HepG2 (cell line): ENCODE measurements at regions of chr9 and their contacts with region 1.

Region 1: GRCh38 chr9:32526041-32526706 is at the start of gene RIGI:
- DNase-seq: peak; percentile 89
- ATAC-seq: peak; percentile 90
- H3K4me3 ChIP-seq: peak within 1 kb of the TSS; percentile 80 to 86 (median 82)
- H3K27ac ChIP-seq: peak within 1 kb of the TSS; percentile 75
- H3K4me1 ChIP-seq: peaks cover 39% of the 10 kb centered on the region
- H3K27me3 ChIP-seq: no peaks in the 10 kb centered on the region; a peak in 1 of 5 replicates
- CTCF ChIP-seq: peak; percentile 75
- EP300 ChIP-seq: 0 out of 4 replicates have a peak, but pooled peaks of 1 of the 2 experiments have one; percentile 3
- POLR2A ChIP-seq: peak; percentile 65 to 79
- RAD21 ChIP-seq: peak; percentile 47; the same call in 1 of the 2 replicates
- total RNA-seq, gene RIGI: 8.2 and 12.2 TPM in 2 replicates

Region 2: DNA sequence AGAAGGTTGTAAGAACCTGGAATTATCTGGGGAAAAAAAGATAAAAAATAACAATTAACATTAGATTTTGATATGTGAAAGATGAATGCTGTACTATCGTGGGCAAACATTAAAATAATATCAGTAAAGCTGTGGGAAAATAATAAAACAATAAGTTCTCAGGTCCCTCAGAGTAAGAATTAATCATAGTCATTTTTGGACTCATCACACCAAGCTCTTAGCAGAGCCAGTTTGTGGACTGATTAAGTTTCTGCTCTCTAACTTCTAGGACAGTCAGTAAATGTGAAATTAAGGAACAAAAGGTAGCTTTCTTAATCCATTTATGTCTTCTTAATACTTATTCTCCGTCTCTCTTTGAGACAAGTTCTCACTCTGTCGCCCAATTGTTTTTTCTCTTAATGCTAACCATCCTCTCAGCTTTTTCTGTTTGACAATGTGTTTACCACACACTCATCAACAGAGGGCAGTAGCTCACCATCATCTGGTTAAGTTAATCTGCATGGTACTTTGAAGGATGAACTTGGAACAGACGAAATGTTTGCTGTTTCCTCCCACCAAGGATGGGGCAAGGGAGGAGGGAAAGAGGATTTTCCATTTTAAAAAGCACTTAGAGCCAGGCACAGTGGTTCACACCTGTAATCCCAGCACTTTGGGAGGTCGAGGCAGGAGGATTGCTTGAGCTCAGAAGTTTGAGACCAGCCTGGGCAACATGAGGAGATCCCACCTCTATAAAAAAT is 147.0 kb before region 1 on chr9:
- CTCF ChIA-PET with region 1: interaction called, 33 read pairs
- POLR2A ChIA-PET with region 1: interaction called, 34 read pairs
- in situ Hi-C with region 1: loop called (anchors 5 kb)
- intact Hi-C with region 1: loop called (anchors 1 kb)
- DNase-seq: peak; percentile 85
- ATAC-seq: peak; percentile 74
- H3K4me3 ChIP-seq: no peak overlapping the region; a peak in 1 of 6 replicates
- H3K27ac ChIP-seq: no peak overlapping the region
- H3K4me1 ChIP-seq: peaks cover 30% of the 10 kb centered on the region
- H3K27me3 ChIP-seq: no peaks in the 10 kb centered on the region
- CTCF ChIP-seq: peak; percentile 94
- EP300 ChIP-seq: no peak
- POLR2A ChIP-seq: no peak
- RAD21 ChIP-seq: peak; percentile 86

Region 3: DNA sequence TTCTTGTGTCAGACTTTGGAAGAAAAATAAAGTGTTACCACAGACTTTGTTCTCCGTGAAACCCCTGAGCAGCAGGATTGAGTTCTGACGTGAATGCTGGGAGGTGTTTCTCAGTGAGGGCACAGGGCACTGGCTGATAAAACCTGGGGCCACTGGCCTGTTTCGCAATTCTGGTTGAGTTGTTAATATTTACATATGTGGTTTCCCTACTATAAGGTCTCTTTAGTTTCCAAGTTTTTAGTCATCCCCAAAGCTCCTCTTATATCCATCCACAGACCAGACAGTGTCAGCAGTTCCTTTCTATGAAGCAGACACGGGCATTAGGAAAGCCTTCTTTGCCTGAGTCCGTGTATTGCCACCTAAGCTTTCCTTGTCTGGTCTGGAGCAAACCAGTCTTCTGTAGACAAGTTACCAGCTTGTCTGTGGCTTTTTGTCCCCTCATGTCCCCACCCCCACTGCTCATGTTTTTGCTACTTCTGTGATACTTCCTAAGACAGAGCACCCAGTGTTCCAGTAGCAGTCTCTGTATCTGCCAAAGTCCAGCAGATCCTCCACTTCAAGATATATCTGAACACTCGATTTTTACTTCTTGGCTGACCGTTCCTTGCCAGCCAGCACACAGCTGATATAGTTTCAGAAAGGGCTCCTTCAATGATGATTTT is 99.8 kb before region 1 on chr9:
- CTCF ChIA-PET with region 1: no interaction called
- POLR2A ChIA-PET with region 1: interaction called, 13 read pairs
- in situ Hi-C with region 1: no loop called
- intact Hi-C with region 1: loop called (anchors 1 kb)
- DNase-seq: peak; percentile 92
- ATAC-seq: peak; percentile 96
- H3K4me3 ChIP-seq: peak overlapping the region in 2 of 3 experiments; percentile 25 to 40; a peak in 2 of 6 replicates
- H3K27ac ChIP-seq: peak overlapping the region; percentile 88
- H3K4me1 ChIP-seq: peaks cover 53% of the 10 kb centered on the region
- H3K27me3 ChIP-seq: no peaks in the 10 kb centered on the region
- CTCF ChIP-seq: no peak
- EP300 ChIP-seq: peak in 1 of 2 experiments; percentile 81; a peak in 3 of 4 replicates
- POLR2A ChIP-seq: peak in 1 of 2 experiments; percentile 27; a peak in 1 of 4 replicates
- RAD21 ChIP-seq: no peak

Region 4: GRCh38 chr9:32487981-32488380 is 38.2 kb before region 1 on chr9:
- CTCF ChIA-PET with region 1: no interaction called
- POLR2A ChIA-PET with region 1: interaction called, 13 read pairs
- in situ Hi-C with region 1: no loop called
- intact Hi-C with region 1: loop called (anchors 1 kb)
- DNase-seq: no peak
- ATAC-seq: no peak
- H3K4me3 ChIP-seq: no peak overlapping the region
- H3K27ac ChIP-seq: no peak overlapping the region
- H3K4me1 ChIP-seq: peaks cover 17% of the 10 kb centered on the region
- H3K27me3 ChIP-seq: no peaks in the 10 kb centered on the region
- CTCF ChIP-seq: no peak
- EP300 ChIP-seq: no peak
- POLR2A ChIP-seq: no peak
- RAD21 ChIP-seq: no peak

Region 5: GRCh38 chr9:32571969-32572899 is 46.1 kb after region 1 on chr9:
- CTCF ChIA-PET with region 1: no interaction called
- POLR2A ChIA-PET with region 1: interaction called, 5 read pairs
- in situ Hi-C with region 1: no loop called
- intact Hi-C with region 1: loop called (anchors 1 kb)
- DNase-seq: peak; percentile 83
- ATAC-seq: peak; percentile 96
- H3K4me3 ChIP-seq: peak overlapping the region; percentile 81 to 95 (median 83)
- H3K27ac ChIP-seq: peak overlapping the region; percentile 77
- H3K4me1 ChIP-seq: peaks cover 24% of the 10 kb centered on the region
- H3K27me3 ChIP-seq: no peaks in the 10 kb centered on the region; a peak in 1 of 5 replicates
- CTCF ChIP-seq: peak; percentile 78
- EP300 ChIP-seq: no peak
- POLR2A ChIP-seq: no peak
- RAD21 ChIP-seq: peak; percentile 26; the same call in 1 of the 2 replicates